ENCODE measurements at regions of chr16 and their contacts with region 1.

Region 1: DNA sequence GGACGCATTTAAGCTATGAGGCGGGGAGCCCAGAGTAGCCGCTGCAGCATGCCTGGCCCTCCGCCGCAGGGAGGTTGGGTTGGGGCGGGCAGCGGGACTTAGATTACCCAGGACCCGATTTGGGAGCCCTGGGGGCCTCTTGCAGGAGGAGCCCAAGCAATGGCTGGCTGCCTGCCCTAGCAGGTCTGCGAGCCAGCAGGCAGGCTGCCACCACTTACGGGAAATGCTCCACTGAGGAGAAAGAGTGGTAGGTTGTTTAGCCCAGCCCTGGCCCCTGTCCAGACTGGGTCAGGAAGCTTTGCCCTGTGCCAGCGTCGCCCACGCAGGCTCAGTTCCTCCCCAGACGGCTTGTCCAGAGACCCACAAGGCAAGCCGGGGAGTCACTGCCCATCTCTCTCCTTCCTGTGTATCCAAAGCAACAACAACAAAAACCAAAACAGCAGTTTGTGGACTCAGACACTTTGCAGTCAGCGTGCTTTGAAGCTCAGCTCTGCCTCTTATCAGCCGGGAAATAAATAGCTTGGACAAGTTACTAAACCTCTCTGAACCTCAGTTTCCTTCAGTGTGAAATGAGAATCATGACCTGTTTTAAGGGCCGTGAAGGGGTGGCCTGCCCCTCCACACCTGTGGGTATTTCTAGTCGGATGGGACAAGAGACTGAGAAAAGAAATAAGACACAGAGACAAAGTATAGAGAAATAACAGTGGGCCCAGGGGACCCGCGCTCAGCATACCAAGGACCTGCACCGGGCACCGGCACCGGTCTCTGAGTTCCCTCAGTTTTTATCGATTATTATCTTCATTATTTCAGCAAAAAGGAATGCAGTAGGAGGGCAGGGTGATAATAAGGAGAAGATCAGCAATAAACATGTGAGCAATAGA is 10.5 kb upstream of the TVP23A start:
- DNase-seq: peak; percentile 93 to 98 (median 96)
- ATAC-seq: peak; percentile 82 to 92 (median 86)
- H3K4me3 ChIP-seq: peak overlapping the region in 6 of 12 donors; percentile 6 to 16 (median 10)
- H3K27ac ChIP-seq: peak overlapping the region; percentile 91 to 99 (median 94)
- H3K4me1 ChIP-seq: peaks cover 3 to 51% (median 33%) of the 10 kb centered on the region in 12 donors
- H3K27me3 ChIP-seq: no peaks in the 10 kb centered on the region
- CTCF ChIP-seq: no peak
- POLR2A ChIP-seq: no peak

Region 2: DNA sequence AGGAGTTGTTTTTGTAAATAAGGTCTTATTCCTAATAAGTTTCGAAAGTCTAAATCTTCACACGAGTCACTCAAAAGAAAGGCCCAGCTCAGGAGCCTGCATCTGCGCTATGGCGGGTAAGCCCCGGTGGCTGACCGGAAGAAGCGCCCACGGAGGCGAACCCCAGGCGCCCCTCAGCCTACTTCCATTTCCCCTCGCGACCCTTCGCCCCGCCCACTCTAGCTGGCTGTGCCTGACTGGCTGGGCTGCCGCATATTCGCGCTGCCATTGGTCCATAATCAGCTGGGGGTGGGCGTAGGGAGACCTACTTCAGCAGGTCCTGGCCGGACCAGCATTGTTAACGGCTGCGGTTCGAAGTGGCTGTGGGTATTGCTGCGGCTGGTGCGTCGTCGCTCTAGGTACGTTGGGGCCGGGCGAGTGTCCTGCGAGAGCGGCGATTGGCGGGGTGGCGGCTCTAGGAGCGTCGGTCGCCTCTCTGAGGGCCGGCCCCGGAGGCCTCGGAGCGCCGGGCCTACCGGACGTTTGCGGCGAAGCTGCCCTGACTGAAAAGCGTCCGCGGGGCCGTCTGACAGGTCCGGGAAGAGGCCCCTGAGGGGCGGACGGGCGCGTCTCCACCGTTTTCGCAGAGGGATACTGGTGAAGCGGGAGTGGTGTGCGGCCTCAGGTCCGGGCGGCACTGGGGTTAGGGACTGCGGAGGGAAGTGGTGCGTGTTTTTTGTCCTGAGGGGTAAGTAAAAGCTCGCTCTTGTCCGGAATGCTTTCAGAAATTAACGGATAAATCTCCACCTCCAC is 443.2 kb before region 1 on chr16 and contains the start of gene ATF7IP2:
- intact Hi-C with region 1: loop called in 1 of 10 experiments (anchors 5 kb)
- DNase-seq: peak; percentile 92 to 96 (median 95)
- ATAC-seq: peak; percentile 98 to 100 (median 99)
- H3K4me3 ChIP-seq: peak within 1 kb of the TSS; percentile 40 to 88 (median 78)
- H3K27ac ChIP-seq: peak within 1 kb of the TSS; percentile 63 to 91 (median 88)
- H3K4me1 ChIP-seq: peaks cover 0 to 21% (median 9%) of the 10 kb centered on the region in 12 donors
- H3K27me3 ChIP-seq: no peaks in the 10 kb centered on the region
- CTCF ChIP-seq: no peak
- POLR2A ChIP-seq: peak; percentile 61 to 91
- total RNA-seq, gene ATF7IP2: 34.4 to 51.8 (median 43.2) TPM

Region 3: GRCh38 chr16:10743610-10744393 is 85.3 kb before region 1 on chr16 and contains the start of gene NUBP1:
- intact Hi-C with region 1: loop called in 6 of 10 experiments (anchors 1 to 5 kb)
- DNase-seq: peak; percentile 99
- ATAC-seq: peak; percentile 96 to 97 (median 97)
- H3K4me3 ChIP-seq: peak within 1 kb of the TSS; percentile 18 to 82 (median 64)
- H3K27ac ChIP-seq: peak within 1 kb of the TSS; percentile 95 to 100 (median 98)
- H3K4me1 ChIP-seq: peaks cover 5 to 43% (median 28%) of the 10 kb centered on the region in 12 donors
- H3K27me3 ChIP-seq: no peaks in the 10 kb centered on the region
- CTCF ChIP-seq: peak in 1 of 12 donors; percentile 7
- POLR2A ChIP-seq: peak; percentile 93 to 98
- total RNA-seq, gene NUBP1: 34.0 to 54.8 (median 47.9) TPM

Region 4: DNA sequence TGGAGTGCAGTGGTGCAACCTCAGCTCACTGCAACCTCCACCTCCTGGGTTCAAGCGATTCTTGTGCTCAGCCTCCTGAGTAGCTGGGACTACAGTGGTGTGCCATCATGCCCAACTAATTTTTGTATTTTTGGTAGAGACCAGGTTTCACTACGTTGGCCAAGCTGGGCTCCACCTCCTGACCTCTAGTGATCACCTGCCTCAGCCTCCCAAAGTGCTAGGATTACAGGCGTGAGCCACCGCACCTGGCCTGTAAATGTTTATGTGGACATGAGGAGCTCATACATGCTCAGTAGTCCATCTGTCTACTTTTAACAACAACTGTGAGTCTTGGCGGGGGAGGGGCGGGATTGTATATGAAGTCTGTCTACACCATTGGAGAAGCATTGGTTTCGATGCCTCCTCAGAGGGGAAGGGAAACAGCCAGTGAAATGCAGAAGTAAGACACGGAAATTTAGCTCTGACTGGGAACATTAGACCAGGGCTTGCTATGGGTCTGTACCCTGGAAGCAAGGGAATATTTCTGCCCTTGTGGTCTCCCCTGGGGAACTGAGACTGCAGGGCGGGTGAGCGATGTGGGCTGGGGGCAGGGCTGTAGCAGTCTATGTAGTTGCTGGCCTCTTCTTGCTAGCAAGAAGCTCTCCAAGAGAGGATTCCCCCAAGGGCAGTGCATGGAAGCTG is 76.1 kb before region 1 on chr16:
- intact Hi-C with region 1: loop called in 2 of 10 experiments (anchors 5 to 10 kb)
- DNase-seq: peak; percentile 56 to 86 (median 59)
- ATAC-seq: peak; percentile 5 to 60 (median 30)
- H3K4me3 ChIP-seq: no peak overlapping the region
- H3K27ac ChIP-seq: peak overlapping the region in 3 of 12 donors; percentile 36 to 84 (median 46)
- H3K4me1 ChIP-seq: peaks cover 0 to 49% (median 6%) of the 10 kb centered on the region in 12 donors
- H3K27me3 ChIP-seq: no peaks in the 10 kb centered on the region
- CTCF ChIP-seq: no peak
- POLR2A ChIP-seq: no peak

Region 5: GRCh38 chr16:10799736-10800135 is 29.4 kb before region 1 on chr16:
- intact Hi-C with region 1: no loop called
- DNase-seq: no peak
- ATAC-seq: no peak
- H3K4me3 ChIP-seq: no peak overlapping the region
- H3K27ac ChIP-seq: peak overlapping the region in 1 of 12 donors; percentile 48
- H3K4me1 ChIP-seq: peaks cover 0 to 8% (median 0%) of the 10 kb centered on the region in 12 donors
- H3K27me3 ChIP-seq: no peaks in the 10 kb centered on the region
- CTCF ChIP-seq: no peak
- POLR2A ChIP-seq: no peak

Region 6: DNA sequence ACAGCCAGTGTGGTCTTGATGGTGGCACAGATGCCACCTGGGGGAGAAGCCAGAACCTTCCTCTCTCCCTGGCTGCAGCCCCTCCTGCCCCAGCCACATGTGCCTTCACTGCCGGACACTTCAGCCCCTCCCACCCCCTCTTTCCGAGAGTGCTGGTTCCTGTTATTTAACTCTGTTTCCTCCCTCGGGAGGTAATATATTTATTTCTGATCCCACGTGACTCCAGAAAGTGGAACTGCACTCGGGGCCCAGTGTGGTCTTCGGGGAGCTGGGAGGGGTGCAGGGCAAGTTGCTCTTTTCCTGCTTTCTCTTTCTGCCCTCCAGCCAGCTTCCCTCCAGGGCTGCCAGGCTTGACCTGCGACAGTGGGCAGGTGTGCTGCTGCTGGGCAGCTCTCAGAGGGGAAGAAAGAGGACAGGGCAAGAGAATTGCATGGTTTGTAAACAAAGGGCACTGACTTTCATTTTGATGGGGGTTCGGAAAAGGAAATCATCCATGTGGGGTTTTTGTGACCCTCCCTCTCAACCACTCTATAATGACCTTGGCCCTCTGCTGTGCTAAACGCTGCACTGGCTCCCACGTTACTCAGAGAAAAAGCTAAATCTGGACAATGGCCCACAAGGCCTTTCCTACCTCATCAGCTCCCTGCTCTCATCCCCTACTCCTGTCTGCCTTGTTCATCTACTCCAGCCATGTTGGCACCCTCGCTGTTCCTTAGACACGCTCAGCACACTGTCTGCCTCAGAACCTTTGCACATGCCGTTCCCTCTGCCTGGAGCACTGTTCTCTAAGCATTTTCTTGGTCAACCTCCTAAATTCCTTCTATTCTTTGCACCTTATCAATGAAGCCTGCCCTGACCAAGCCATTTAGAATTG is 39.7 kb after region 1 on chr16:
- intact Hi-C with region 1: loop called in 3 of 10 experiments (anchors 2 to 5 kb)
- DNase-seq: peak; percentile 68 to 75 (median 74)
- ATAC-seq: peak; percentile 53 to 85 (median 59)
- H3K4me3 ChIP-seq: peak overlapping the region in 7 of 12 donors; percentile 10 to 40 (median 24)
- H3K27ac ChIP-seq: peak overlapping the region; percentile 6 to 92 (median 62)
- H3K4me1 ChIP-seq: peaks cover 0 to 73% (median 29%) of the 10 kb centered on the region in 12 donors
- H3K27me3 ChIP-seq: peaks cover 0 to 9% (median 0%) of the 10 kb centered on the region in 9 donors
- CTCF ChIP-seq: no peak
- POLR2A ChIP-seq: no peak

Region 7: GRCh38 chr16:10876799-10877341 is 47.8 kb after region 1 on chr16 and contains the start of gene CIITA:
- intact Hi-C with region 1: loop called in 2 of 10 experiments (anchors 2 to 5 kb)
- DNase-seq: peak; percentile 70 to 88 (median 77)
- ATAC-seq: peak in 3 of 4 donors; percentile 46 to 68 (median 58)
- H3K4me3 ChIP-seq: peak within 1 kb of the TSS in 7 of 12 donors; percentile 56 to 81 (median 65)
- H3K27ac ChIP-seq: peak within 1 kb of the TSS in 5 of 12 donors; percentile 69 to 91 (median 82)
- H3K4me1 ChIP-seq: peaks cover 0 to 66% (median 13%) of the 10 kb centered on the region in 12 donors
- H3K27me3 ChIP-seq: peaks cover 0 to 9% (median 4%) of the 10 kb centered on the region in 9 donors
- CTCF ChIP-seq: no peak
- POLR2A ChIP-seq: no peak
- total RNA-seq, gene CIITA: 1.6 to 73.9 (median 8.2) TPM

Region 8: DNA sequence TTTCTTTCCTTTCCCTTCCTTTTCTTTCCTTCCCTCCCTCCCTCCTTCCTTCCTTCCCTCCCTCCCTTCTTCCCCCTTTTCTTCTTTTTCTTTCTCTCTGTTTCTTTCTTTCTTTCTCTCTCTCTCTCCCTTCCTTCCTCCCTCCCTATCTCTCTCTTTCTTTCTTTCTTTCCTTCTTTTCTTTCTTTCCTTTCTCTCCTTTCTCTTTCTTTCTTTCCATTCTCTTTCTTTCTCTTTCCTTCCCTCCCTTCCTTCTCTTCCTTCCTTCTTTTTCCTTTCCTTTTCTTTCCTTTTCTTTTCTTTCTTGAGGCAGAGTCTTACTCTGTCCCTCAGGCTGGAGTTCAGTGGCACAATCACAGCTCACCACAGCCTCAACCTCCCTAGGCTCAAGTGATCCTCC is 82.2 kb after region 1 on chr16:
- intact Hi-C with region 1: loop called in 5 of 10 experiments (anchors 5 to 10 kb)
- DNase-seq: no peak
- ATAC-seq: no peak
- H3K4me3 ChIP-seq: no peak overlapping the region
- H3K27ac ChIP-seq: no peak overlapping the region
- H3K4me1 ChIP-seq: peaks cover 0 to 11% (median 0%) of the 10 kb centered on the region in 12 donors
- H3K27me3 ChIP-seq: no peaks in the 10 kb centered on the region
- CTCF ChIP-seq: no peak
- POLR2A ChIP-seq: no peak